CD4-positive, alpha-beta T cell (primary cell): ENCODE measurements at regions of chr7 and their contacts with region 1.

Region 1: DNA sequence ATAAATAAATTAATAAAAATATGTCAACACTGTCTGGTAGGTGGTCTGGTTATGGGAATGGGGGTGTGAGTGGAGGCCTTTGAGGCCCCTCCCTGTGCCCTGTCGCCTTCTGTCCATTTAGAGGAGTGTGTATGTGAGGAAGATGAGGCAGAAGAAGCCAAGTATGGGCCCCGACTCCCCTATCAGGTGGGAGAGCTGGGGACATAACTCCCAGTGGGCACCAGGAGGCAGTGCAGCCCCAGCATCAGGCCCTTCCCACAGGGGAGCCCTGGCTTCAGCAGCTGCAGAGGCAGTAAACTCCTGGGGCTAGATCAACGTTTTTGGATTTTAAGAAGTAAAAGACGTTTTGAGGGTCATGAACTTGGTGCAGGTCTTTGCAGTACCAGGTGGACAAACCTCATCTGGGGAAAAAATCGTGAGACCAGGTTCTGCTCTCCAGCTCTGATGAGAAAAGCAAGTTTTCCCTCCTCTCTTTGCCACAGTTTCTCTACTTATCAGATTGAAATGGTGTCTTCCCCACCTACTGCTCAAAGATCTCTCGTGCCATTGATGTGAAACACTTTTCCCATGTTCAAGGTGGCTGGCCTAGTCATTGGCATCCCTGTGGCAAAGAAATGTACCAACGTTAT is 167.8 kb upstream of the EEPD1 start:
- DNase-seq: peak; percentile 71 to 88 (median 75)
- ATAC-seq: peak; percentile 100
- H3K4me3 ChIP-seq: no peak overlapping the region
- H3K4me3 Mint-ChIP-seq: no peak overlapping the region
- H3K27ac ChIP-seq: no peak overlapping the region
- H3K27ac Mint-ChIP-seq: no peak overlapping the region
- H3K4me1 ChIP-seq: no peaks in the 10 kb centered on the region
- H3K4me1 Mint-ChIP-seq: no peaks in the 10 kb centered on the region
- H3K27me3 ChIP-seq: no peaks in the 10 kb centered on the region
- H3K27me3 Mint-ChIP-seq: no peaks in the 10 kb centered on the region
- CTCF ChIP-seq: peak; percentile 91

Region 2: GRCh38 chr7:35768346-35768745 is 216.9 kb before region 1 on chr7:
- CTCF ChIA-PET with region 1: no interaction called
- POLR2A ChIA-PET with region 1: no interaction called
- intact Hi-C with region 1: no loop called
- DNase-seq: no peak
- ATAC-seq: no peak
- H3K4me3 ChIP-seq: no peak overlapping the region
- H3K4me3 Mint-ChIP-seq: no peak overlapping the region
- H3K27ac ChIP-seq: no peak overlapping the region
- H3K27ac Mint-ChIP-seq: no peak overlapping the region
- H3K4me1 ChIP-seq: no peaks in the 10 kb centered on the region
- H3K4me1 Mint-ChIP-seq: no peaks in the 10 kb centered on the region
- H3K27me3 ChIP-seq: no peaks in the 10 kb centered on the region
- H3K27me3 Mint-ChIP-seq: no peaks in the 10 kb centered on the region
- CTCF ChIP-seq: no peak

Region 3: DNA sequence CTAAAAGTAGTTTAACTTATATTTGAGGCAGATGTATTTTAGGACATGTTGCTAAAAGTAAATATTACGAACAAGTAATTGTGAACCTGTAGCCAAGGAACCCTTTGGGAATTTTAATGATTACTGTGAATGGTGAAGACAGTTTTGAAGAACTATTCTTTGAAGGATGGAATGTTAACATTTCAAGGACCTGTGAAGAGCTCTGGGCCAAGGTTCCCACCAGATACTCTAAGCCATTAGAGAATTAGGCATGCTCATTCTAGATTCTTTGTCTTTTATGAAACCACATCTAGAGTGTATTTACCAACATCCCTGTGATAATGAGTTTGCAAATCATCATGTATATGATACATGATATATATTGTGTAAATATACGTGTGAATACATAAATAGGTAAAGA is 84.6 kb before region 1 on chr7:
- CTCF ChIA-PET with region 1: no interaction called
- POLR2A ChIA-PET with region 1: no interaction called
- intact Hi-C with region 1: no loop called
- DNase-seq: no peak
- ATAC-seq: no peak
- H3K4me3 ChIP-seq: no peak overlapping the region
- H3K4me3 Mint-ChIP-seq: no peak overlapping the region
- H3K27ac ChIP-seq: no peak overlapping the region
- H3K27ac Mint-ChIP-seq: no peak overlapping the region
- H3K4me1 ChIP-seq: no peaks in the 10 kb centered on the region
- H3K4me1 Mint-ChIP-seq: no peaks in the 10 kb centered on the region
- H3K27me3 ChIP-seq: no peaks in the 10 kb centered on the region
- H3K27me3 Mint-ChIP-seq: no peaks in the 10 kb centered on the region
- CTCF ChIP-seq: no peak

Region 4: DNA sequence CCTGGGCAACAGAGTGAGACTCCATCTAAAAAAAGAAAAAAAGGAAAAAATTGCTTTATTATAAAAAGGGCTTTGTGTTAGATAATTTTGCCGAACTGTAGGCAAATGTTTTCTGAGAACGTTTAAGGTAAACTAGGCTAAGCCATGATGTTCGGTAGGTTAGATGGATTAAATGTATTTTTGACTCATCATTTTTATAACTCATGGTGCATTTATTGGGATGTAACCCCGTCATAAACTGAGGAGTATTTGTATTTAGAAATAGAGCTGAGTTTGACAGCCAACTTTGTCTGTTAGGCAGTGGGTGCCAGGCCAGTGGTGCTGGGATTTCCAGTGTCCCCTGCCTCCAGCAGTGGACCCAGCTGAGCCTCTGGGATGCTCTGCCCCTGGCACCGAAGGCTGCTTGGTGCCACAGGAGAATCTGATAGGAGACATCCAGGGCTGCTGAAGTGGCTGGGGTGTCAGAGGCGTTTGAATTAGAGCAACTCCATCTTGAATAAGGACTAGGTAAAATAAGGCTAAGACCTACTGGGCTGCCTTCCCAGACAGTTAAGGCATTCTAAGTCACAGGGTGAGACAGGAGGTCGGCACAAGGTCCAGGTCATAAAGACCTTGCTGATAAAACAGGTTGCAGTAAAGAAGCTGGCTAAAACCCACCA is 53.0 kb after region 1 on chr7:
- CTCF ChIA-PET with region 1: no interaction called
- POLR2A ChIA-PET with region 1: no interaction called
- intact Hi-C with region 1: loop called in 1 of 2 experiments (anchors 1 kb)
- DNase-seq: no peak
- ATAC-seq: no peak
- H3K4me3 ChIP-seq: no peak overlapping the region
- H3K4me3 Mint-ChIP-seq: no peak overlapping the region
- H3K27ac ChIP-seq: no peak overlapping the region
- H3K27ac Mint-ChIP-seq: no peak overlapping the region
- H3K4me1 ChIP-seq: peaks cover 10% of the 10 kb centered on the region
- H3K4me1 Mint-ChIP-seq: no peaks in the 10 kb centered on the region
- H3K27me3 ChIP-seq: no peaks in the 10 kb centered on the region
- H3K27me3 Mint-ChIP-seq: no peaks in the 10 kb centered on the region
- CTCF ChIP-seq: no peak

Region 5: GRCh38 chr7:36202398-36202797 is 217.2 kb after region 1 on chr7:
- CTCF ChIA-PET with region 1: no interaction called
- POLR2A ChIA-PET with region 1: no interaction called
- intact Hi-C with region 1: loop called in 1 of 2 experiments (anchors 5 kb)
- DNase-seq: no peak
- ATAC-seq: peak; percentile 29
- H3K4me3 ChIP-seq: no peak overlapping the region
- H3K4me3 Mint-ChIP-seq: no peak overlapping the region
- H3K27ac ChIP-seq: no peak overlapping the region
- H3K27ac Mint-ChIP-seq: peak overlapping the region; percentile 63
- H3K4me1 ChIP-seq: peaks cover 37% of the 10 kb centered on the region
- H3K4me1 Mint-ChIP-seq: peaks cover 57% of the 10 kb centered on the region
- H3K27me3 ChIP-seq: no peaks in the 10 kb centered on the region
- H3K27me3 Mint-ChIP-seq: no peaks in the 10 kb centered on the region
- CTCF ChIP-seq: no peak